HEK293T (cell line): ENCODE measurements at regions of chr2 and their contacts with region 1.

Region 1: DNA sequence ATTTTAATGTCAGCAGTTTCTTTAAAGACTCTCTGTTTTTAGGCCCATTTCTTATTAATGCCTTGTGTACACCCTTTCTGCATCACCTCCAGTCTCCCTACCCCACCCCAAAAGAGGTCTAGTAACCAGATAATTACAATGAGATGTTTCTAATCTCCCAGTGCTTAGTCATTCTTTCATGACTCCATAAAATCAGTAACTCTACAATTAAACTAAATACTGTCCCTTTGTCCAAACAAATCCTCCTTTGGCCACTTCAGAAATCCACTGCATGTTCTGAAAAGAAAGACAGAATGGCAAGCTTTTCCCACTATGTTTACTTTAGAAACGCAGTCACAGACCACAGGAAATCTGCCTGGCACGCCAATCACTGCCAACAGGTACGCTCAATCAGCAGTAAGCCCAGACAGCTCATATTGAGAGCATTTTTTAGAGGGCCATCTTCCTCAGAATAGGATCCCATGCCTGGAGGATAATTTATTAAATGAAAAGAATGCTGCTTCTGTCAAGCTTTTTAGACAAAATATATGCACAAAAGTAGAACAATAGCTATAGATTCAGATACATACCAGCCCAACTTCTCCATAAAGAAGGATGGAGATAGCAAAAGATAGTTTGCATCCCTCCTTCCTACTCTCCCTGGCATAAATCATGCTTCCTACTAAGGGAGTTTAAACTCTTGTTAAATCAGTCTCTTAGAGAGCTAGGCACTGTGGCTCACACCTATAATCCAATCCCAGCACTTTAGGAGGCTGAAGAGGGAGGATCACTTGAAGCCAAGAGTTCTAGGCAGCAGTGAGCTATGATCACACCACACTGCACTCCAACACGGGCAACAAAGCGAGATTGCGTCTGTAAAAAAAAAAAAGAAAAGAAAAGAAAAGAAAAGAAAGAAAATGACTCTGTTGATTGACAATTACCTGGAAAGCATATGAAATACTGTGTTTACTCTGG is 14.6 kb downstream of the CLASP1 start:
- DNase-seq: no peak

Region 2: GRCh38 chr2:121649596-121650314 is 15.1 kb after region 1 on chr2:
- CTCF ChIA-PET with region 1: interaction called, 4 read pairs
- POLR2A ChIA-PET with region 1: interaction called, 18 read pairs
- DNase-seq: peak; percentile 72

Region 3: DNA sequence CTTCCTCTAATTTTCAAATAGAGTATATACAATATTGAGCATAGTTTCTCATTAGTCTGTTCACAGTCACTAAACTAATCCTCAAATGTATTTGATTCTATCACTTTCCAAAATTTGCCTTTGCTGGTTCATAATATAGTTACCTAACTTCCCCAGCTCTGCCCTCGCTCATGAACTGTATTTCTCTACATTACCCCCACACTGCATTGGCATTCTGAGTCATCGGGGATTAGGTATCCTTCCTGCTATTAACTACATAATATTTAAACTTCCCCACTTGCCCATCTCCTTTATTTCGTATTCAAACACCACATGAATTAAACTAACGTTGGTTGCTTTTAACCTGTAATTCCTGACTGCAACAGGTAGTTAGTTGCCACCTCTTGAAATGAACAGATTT is 29.5 kb after region 1 on chr2:
- CTCF ChIA-PET with region 1: no interaction called
- POLR2A ChIA-PET with region 1: no interaction called
- DNase-seq: no peak